ENCODE measurements at regions of chr10 and their contacts with region 1.

Region 1: GRCh38 chr10:11404901-11405300 is 206.5 kb downstream of the USP6NL start:
- DNase-seq: no peak
- H3K4me3 ChIP-seq: no peak overlapping the region
- H3K27ac ChIP-seq: no peak overlapping the region
- H3K4me1 ChIP-seq: no peaks in the 10 kb centered on the region
- H3K27me3 ChIP-seq: peaks cover 45% of the 10 kb centered on the region
- CTCF ChIP-seq: no peak

Region 2: GRCh38 chr10:11154333-11154732 is 250.6 kb before region 1 on chr10:
- CTCF ChIA-PET with region 1: no interaction called
- POLR2A ChIA-PET with region 1: no interaction called
- intact Hi-C with region 1: no loop called
- DNase-seq: no peak
- H3K4me3 ChIP-seq: no peak overlapping the region
- H3K27ac ChIP-seq: no peak overlapping the region
- H3K4me1 ChIP-seq: no peaks in the 10 kb centered on the region
- H3K27me3 ChIP-seq: peaks cover 38% of the 10 kb centered on the region
- CTCF ChIP-seq: no peak

Region 3: DNA sequence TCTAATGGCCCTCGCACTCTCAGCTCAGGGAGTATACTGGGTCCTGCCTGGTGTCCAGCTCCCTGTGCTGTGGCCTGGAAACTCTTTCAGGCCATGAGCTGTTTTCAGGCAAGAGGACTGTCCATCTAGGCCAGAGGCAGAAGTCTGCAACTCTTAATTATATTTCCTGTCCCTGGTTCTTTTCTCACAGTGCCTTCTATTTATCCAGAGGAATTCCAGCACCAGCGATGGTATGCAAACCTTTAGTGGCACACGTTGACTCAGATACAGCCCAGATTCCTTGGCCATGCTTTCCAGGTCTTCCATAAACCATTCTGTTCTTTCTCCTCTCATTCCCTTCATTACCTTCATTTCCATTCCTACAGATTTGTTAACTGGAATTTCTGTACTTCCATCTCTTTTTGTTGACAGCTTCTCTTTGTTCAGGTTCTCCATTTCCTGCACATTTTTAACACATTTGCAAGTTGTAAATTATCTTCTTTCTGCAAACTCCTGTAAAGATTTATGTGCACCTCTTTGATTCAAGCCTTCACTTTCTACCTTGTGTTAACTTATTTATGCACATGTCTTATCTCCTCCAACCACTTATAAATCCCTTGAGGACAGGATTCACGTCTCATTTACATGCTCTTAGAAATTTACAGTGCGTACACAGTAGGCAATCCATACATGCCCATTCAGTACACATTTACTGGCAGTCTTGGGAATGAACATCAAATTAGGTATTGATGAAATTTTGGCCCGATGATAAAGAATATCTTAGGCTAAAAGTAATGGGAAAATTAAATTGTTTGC is 215.1 kb before region 1 on chr10:
- CTCF ChIA-PET with region 1: interaction called, 24 read pairs
- POLR2A ChIA-PET with region 1: no interaction called
- intact Hi-C with region 1: no loop called
- DNase-seq: no peak
- H3K4me3 ChIP-seq: no peak overlapping the region
- H3K27ac ChIP-seq: no peak overlapping the region
- H3K4me1 ChIP-seq: no peaks in the 10 kb centered on the region
- H3K27me3 ChIP-seq: peaks cover 8% of the 10 kb centered on the region
- CTCF ChIP-seq: no peak

Region 4: DNA sequence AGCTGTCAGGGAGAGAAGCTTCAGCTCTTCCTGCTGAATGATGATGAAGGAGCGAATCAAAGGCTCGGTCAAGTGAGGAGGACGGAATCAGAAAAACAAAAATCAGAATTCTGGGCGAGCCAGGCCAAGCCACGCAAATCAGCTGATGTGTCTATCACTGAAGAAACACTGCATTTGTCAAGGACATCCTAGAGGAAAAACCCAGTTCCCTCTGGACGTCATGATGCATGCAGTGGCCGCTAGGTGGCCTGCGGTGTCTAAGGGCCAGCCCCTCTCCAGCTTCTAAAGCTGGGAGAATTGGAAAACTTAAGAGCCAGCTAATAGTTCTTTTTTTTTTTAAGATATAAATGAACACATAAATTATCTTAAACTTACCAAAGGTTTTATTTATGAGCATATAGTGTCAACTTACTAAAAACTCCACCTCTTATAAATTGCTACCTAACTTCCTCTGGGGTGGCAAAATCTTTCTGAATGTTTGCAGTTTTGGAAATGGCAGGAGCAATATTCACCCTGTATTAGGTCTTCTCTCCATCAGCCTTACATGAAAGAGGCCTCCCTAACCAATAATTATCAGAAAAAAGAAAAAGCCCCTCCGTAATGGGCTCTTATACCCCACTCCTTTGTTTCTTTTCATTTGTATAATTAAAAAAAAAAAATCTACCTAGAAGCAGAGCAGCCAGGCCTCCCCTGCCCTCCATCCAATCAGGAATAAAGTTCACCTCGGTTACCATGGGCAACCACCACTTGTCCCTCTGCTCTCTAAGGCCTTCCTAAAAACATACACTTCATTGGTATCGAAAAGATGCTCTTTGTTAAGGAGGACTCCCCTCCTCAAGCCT is 19.8 kb after region 1 on chr10:
- CTCF ChIA-PET with region 1: no interaction called
- POLR2A ChIA-PET with region 1: no interaction called
- intact Hi-C with region 1: no loop called
- DNase-seq: peak in 1 of 2 experiments; percentile 40
- H3K4me3 ChIP-seq: no peak overlapping the region
- H3K27ac ChIP-seq: no peak overlapping the region
- H3K4me1 ChIP-seq: no peaks in the 10 kb centered on the region
- H3K27me3 ChIP-seq: peaks cover 4% of the 10 kb centered on the region; the same call in 1 of the 2 replicates
- CTCF ChIP-seq: peak; percentile 80

Region 5: GRCh38 chr10:11886851-11887250 is 481.9 kb after region 1 on chr10:
- CTCF ChIA-PET with region 1: no interaction called
- POLR2A ChIA-PET with region 1: no interaction called
- intact Hi-C with region 1: no loop called
- DNase-seq: peak; percentile 45 to 66
- H3K4me3 ChIP-seq: no peak overlapping the region
- H3K27ac ChIP-seq: peak overlapping the region; percentile 65
- H3K4me1 ChIP-seq: peaks cover 39% of the 10 kb centered on the region
- H3K27me3 ChIP-seq: no peaks in the 10 kb centered on the region
- CTCF ChIP-seq: no peak

Region 6: DNA sequence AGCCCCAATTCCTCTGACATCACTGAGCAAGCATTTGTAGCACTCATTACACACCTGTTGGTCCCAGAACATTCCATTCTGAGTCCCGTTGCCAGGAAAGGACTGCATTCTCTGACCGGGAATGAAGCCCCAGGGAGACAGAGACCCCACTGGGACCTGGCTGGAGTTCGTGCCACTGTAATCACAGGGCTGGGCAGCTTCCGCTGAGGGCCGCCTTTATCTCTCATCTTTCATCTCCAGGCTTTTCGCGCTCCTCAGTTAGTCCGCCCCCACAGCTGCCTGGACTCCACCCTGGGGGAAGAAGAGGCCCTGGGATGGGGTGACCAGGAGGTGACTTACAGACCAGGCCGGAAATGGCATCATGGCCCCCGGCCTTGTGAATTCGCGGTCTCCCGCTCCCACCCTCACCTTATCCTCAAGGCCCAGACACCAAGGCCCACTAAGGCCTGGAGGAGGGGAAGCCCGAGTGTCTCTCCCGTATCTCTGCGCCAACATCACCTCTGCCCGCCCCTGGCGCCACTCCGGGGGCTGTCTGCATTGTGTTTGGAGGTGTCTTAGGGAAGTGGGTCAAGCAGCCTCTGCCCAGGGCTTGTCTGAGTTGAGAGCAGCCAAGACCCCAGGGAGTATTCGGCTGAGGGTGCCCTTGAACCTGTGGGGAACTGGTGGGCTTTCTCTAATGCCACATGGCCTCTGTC is 493.6 kb after region 1 on chr10:
- CTCF ChIA-PET with region 1: no interaction called
- POLR2A ChIA-PET with region 1: no interaction called
- intact Hi-C with region 1: no loop called
- DNase-seq: peak; percentile 91 to 94
- H3K4me3 ChIP-seq: no peak overlapping the region; the same call in 1 of the 2 replicates
- H3K27ac ChIP-seq: peak overlapping the region; percentile 99
- H3K4me1 ChIP-seq: peaks cover 33% of the 10 kb centered on the region
- H3K27me3 ChIP-seq: no peaks in the 10 kb centered on the region
- CTCF ChIP-seq: no peak

Measured in PC-9 (cell line).